ENCODE measurements at regions of chr10 and their contacts with region 1.

Region 1: GRCh38 chr10:119207367-119207668 is at the start of gene GRK5:
- DNase-seq: peak; percentile 90
- ATAC-seq: peak; percentile 86
- H3K4me3 Mint-ChIP-seq: peak within 1 kb of the TSS; percentile 87
- H3K27ac Mint-ChIP-seq: peak within 1 kb of the TSS; percentile 95; the same call in 1 of the 2 replicates
- H3K4me1 Mint-ChIP-seq: peaks cover 40% of the 10 kb centered on the region
- H3K27me3 Mint-ChIP-seq: peaks cover 18% of the 10 kb centered on the region
- CTCF ChIP-seq: no peak
- total RNA-seq, gene GRK5: 1.9 to 2.3 TPM (median 2.2 TPM) in 3 replicates

Region 2: GRCh38 chr10:119241066-119241465 is 33.7 kb after region 1 on chr10:
- CTCF ChIA-PET with region 1: interaction called, 14 read pairs
- POLR2A ChIA-PET with region 1: interaction called, 4 read pairs
- DNase-seq: no peak
- ATAC-seq: no peak
- H3K4me3 Mint-ChIP-seq: no peak overlapping the region
- H3K27ac Mint-ChIP-seq: no peak overlapping the region
- H3K4me1 Mint-ChIP-seq: peaks cover 44% of the 10 kb centered on the region
- H3K27me3 Mint-ChIP-seq: no peaks in the 10 kb centered on the region
- CTCF ChIP-seq: no peak

Region 3: GRCh38 chr10:119316729-119317097 is 109.4 kb after region 1 on chr10:
- CTCF ChIA-PET with region 1: interaction called, 10 read pairs
- POLR2A ChIA-PET with region 1: no interaction called
- DNase-seq: no peak
- ATAC-seq: no peak
- H3K4me3 Mint-ChIP-seq: no peak overlapping the region
- H3K27ac Mint-ChIP-seq: peak overlapping the region; percentile 55
- H3K4me1 Mint-ChIP-seq: peaks cover 42% of the 10 kb centered on the region
- H3K27me3 Mint-ChIP-seq: no peaks in the 10 kb centered on the region
- CTCF ChIP-seq: no peak

Region 4: GRCh38 chr10:119421887-119422681 is 214.8 kb after region 1 on chr10:
- CTCF ChIA-PET with region 1: interaction called, 28 read pairs
- POLR2A ChIA-PET with region 1: no interaction called
- DNase-seq: no peak
- ATAC-seq: peak; percentile 65
- H3K4me3 Mint-ChIP-seq: no peak overlapping the region
- H3K27ac Mint-ChIP-seq: no peak overlapping the region
- H3K4me1 Mint-ChIP-seq: peaks cover 19% of the 10 kb centered on the region
- H3K27me3 Mint-ChIP-seq: no peaks in the 10 kb centered on the region
- CTCF ChIP-seq: no peak

Region 5: DNA sequence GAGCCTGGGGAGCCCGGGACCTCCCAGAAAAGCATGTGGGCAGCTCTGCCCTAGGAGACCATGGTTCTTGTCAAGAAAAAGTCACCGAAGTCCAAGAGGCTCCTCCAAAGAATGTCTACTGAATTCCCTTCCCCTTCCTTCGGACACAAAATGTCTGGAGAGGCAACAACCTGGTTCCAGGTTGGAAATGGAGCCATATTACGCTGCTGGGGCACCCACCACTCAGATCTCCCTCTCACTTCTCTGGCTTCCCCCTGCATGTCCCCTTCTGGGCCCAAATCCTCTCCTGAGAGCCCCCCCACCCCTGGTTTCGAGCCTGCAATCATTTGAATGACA is 282.6 kb after region 1 on chr10:
- CTCF ChIA-PET with region 1: interaction called, 59 read pairs
- POLR2A ChIA-PET with region 1: no interaction called
- DNase-seq: no peak
- ATAC-seq: no peak
- H3K4me3 Mint-ChIP-seq: no peak overlapping the region
- H3K27ac Mint-ChIP-seq: no peak overlapping the region
- H3K4me1 Mint-ChIP-seq: no peaks in the 10 kb centered on the region
- H3K27me3 Mint-ChIP-seq: no peaks in the 10 kb centered on the region; the same call in 1 of the 2 replicates
- CTCF ChIP-seq: no peak

Measured in WTC11 (cell line).